ENCODE measurements at regions of chr12 and their contacts with region 1.

Region 1: GRCh38 chr12:4269279-4269991 is 4.1 kb upstream of the CCND2 start:
- DNase-seq: peak; percentile 96
- ATAC-seq: peak; percentile 22
- H3K4me3 Mint-ChIP-seq: peak overlapping the region; percentile 100
- H3K27ac Mint-ChIP-seq: peak overlapping the region; percentile 99
- H3K4me1 Mint-ChIP-seq: peaks cover 19% of the 10 kb centered on the region
- H3K27me3 Mint-ChIP-seq: no peaks in the 10 kb centered on the region
- CTCF ChIP-seq: peak; percentile 32

Region 2: DNA sequence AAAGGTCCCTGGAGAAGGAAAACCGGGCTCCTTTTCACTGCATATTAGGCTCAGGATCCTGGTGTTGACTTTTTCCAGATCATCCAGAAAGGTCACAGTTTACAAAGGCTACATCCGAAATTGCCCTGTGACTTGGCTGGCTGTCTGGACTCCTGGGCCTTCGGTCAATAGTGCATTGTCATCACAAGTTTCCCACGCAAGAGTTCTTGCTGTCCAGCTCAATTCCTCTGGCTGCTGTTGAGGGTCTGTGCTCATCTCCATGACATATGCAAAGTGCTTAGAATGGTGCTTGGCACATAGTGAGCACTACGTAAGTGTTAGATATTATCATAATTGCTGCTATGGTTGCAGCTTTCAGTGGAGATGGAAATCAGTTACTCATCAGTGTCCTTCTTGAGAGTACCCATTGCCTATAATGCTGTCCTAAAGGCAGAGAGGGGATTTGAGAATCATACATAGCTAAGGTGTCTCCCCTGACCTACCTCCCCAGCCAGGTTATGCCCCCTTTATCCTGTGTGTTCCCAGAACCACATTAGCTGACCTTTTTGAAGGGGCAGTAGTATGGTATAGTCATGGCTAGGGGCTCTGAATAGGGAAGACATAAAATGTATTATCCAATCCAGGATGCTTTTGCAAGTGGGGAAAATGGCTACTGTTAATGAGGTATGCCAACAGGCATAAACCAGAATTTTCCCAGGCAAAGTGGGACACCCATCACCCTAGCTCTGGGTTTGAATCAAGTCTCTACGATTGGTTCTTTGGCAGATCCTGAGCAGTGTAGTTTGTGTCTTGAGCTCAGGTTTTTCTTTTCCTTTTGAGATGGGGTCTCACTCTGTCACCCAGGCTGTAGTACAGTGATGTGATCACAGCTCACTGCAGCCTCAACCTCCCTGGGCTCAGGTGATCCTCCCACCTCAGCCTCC is 127.8 kb before region 1 on chr12:
- CTCF ChIA-PET with region 1: interaction called, 12 read pairs
- POLR2A ChIA-PET with region 1: interaction called, 375 read pairs
- intact Hi-C with region 1: loop called (anchors 2 kb)
- DNase-seq: peak; percentile 38
- ATAC-seq: peak; percentile 28
- H3K4me3 Mint-ChIP-seq: no peak overlapping the region
- H3K27ac Mint-ChIP-seq: peak overlapping the region; percentile 97
- H3K4me1 Mint-ChIP-seq: peaks cover 84% of the 10 kb centered on the region
- H3K27me3 Mint-ChIP-seq: no peaks in the 10 kb centered on the region
- CTCF ChIP-seq: no peak

Region 3: DNA sequence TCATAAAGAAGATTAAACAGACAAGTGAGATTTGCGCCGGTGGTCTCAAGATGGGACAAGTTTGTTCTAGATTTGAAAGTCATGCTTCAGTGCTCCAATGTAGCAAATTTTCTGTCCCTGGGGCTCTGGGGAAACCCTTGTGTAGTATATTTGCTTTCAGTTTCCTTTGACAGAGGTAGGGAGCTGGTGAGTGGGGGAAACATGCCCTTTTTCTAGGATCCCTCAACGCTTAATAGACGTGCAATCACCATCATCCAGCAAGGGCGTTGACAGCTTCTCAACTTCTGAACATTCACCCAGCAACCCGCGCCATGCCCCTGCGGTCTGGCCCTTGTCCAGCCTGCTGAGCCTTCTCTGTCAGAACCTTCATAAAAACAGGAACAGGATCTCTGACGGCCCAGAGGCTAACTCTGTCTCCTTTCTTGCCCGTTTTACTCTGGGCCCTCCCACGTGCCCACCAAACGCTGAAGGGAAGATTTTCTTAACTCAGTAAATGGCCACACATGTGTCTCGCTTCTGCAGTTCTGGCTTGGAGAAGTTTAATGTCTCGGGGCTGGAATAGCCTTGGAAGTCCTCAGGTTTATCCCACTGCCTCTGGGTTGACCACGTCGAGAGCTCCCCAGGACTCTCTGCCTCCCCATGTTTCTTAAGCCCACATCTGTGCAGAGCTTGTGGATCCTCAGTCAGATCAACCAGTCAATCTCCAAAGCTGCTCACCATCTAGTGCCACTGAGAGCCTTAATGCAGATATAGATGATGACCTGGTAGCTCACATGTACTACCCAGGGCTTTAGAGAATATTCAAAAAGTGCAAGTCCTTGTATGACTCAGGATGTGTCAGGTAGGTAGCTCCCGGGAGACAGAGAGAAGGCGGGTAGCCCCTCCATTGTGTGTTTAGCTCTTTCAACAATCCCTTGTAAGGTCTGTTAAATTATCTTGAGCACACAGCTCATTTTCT is 53.9 kb before region 1 on chr12:
- CTCF ChIA-PET with region 1: interaction called, 5 read pairs
- POLR2A ChIA-PET with region 1: interaction called, 20 read pairs
- intact Hi-C with region 1: loop called (anchors 2 kb)
- DNase-seq: peak; percentile 73
- ATAC-seq: peak; percentile 82
- H3K4me3 Mint-ChIP-seq: peak overlapping the region; percentile 50
- H3K27ac Mint-ChIP-seq: peak overlapping the region; percentile 86
- H3K4me1 Mint-ChIP-seq: peaks cover 37% of the 10 kb centered on the region
- H3K27me3 Mint-ChIP-seq: no peaks in the 10 kb centered on the region
- CTCF ChIP-seq: no peak